ENCODE measurements at regions of chr15 and their contacts with region 1.

Region 1: GRCh38 chr15:73873889-73874511 is 636 bp downstream of the TBC1D21 start:
- DNase-seq: peak; percentile 18
- H3K4me3 ChIP-seq: no peak overlapping the region
- H3K27ac ChIP-seq: no peak overlapping the region
- H3K27me3 ChIP-seq: peaks cover 34% of the 10 kb centered on the region
- CTCF ChIP-seq: peak; percentile 71

Region 2: DNA sequence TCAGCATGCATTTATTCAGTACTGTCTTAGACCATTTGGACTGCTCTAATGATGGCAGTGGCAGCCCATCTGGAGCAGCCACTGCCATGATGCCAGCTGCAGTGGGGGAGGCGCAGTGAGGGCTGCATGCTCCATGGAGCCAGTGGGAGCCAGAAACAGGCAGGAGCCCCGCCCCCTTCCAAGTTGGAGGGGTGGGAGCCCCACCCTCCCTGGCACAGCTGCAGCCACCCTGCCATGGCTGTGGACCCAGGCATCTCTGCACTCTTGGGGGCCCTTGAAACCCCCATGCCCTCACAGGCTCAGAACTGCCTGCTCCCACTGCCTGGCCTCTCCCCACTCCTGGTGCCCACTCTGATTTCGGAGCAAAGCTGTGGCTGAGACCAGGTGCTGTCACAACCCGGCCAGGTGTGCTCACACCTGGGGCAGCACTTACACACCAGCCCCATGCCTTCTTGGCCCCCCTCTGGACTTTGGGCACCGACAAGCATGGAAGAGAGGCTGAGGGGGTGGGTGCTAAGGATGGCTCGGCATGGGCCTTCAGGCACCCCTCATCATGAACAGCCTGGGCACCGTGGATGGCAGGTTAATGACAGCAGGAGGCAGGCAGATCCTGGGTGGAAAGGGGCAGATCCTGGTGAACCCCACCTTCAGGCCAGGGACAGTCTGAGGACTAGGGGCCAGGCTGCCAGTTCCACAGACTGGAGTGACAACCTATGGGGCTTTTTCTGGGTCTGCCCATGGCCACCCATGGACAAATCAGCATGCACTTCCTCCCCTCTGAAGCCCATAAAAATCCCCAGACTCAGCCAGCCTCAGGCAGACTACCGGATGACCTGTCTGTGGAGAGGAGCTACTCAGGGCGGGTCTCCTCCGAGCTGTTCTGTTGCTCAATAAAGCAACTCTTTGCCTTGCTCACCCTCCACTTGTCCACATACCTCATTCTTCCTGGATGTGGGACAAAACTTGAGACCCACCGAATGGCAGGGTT is 17.6 kb after region 1 on chr15:
- CTCF ChIA-PET with region 1: interaction called, 22 read pairs
- POLR2A ChIA-PET with region 1: no interaction called
- DNase-seq: no peak
- H3K4me3 ChIP-seq: no peak overlapping the region
- H3K27ac ChIP-seq: no peak overlapping the region
- H3K27me3 ChIP-seq: peaks cover 28% of the 10 kb centered on the region
- CTCF ChIP-seq: no peak

Region 3: DNA sequence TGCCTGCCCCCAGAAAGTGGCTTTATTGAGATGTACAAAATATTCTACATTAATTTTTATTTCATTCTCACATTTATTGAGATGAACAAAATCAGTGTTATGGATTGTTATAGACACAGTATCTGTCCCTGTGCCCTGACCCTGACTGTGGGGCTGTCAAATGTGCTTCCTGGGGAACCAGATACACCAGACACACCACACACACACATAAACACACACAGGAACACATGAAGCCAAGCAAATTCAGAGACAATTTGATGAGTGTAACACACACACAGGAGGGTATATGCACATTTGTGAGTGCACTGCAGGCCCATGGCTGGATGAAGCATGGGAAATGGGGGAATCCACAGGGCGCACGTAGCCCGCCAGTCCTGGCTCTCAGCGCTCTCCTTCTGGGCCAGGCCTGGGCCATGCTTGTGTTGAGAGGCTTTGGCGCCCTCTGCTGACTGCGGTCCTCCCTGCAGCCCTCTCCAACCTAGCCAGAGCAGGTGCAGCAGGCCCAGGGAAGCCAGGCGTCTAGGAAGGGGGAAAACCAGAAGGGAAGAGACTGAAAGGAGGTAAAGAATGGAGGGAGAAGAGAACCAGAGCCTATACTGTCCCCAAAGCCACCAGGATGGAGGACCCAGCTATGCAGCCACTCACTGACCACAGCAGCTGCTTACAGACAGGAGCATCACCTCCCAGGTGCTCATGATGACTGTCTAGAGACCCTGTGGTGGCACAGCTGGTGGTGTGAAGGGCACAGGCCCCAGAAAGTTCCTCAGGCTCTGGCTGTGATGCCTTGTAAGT is 34.2 kb after region 1 on chr15:
- CTCF ChIA-PET with region 1: interaction called, 128 read pairs
- POLR2A ChIA-PET with region 1: no interaction called
- DNase-seq: no peak
- H3K4me3 ChIP-seq: no peak overlapping the region
- H3K27ac ChIP-seq: no peak overlapping the region
- H3K27me3 ChIP-seq: no peaks in the 10 kb centered on the region
- CTCF ChIP-seq: peak; percentile 97

Region 4: GRCh38 chr15:73950831-73951561 is 77.0 kb after region 1 on chr15:
- CTCF ChIA-PET with region 1: interaction called, 26 read pairs
- POLR2A ChIA-PET with region 1: no interaction called
- DNase-seq: peak; percentile 86
- H3K4me3 ChIP-seq: no peak overlapping the region
- H3K27ac ChIP-seq: peak overlapping the region; percentile 82
- H3K27me3 ChIP-seq: no peaks in the 10 kb centered on the region
- CTCF ChIP-seq: peak; percentile 87